ENCODE measurements at regions of chr6 and their contacts with region 1.

Region 1: GRCh38 chr6:148746363-148747144 is at the start of gene UST:
- DNase-seq: peak; percentile 92
- H3K4me3 ChIP-seq: peak within 1 kb of the TSS; percentile 87
- H3K27ac ChIP-seq: peak within 1 kb of the TSS; percentile 85
- H3K27me3 ChIP-seq: no peaks in the 10 kb centered on the region
- CTCF ChIP-seq: peak; percentile 40
- polyA plus RNA-seq, gene UST: 18.6 and 21.4 TPM in 2 replicates

Region 2: DNA sequence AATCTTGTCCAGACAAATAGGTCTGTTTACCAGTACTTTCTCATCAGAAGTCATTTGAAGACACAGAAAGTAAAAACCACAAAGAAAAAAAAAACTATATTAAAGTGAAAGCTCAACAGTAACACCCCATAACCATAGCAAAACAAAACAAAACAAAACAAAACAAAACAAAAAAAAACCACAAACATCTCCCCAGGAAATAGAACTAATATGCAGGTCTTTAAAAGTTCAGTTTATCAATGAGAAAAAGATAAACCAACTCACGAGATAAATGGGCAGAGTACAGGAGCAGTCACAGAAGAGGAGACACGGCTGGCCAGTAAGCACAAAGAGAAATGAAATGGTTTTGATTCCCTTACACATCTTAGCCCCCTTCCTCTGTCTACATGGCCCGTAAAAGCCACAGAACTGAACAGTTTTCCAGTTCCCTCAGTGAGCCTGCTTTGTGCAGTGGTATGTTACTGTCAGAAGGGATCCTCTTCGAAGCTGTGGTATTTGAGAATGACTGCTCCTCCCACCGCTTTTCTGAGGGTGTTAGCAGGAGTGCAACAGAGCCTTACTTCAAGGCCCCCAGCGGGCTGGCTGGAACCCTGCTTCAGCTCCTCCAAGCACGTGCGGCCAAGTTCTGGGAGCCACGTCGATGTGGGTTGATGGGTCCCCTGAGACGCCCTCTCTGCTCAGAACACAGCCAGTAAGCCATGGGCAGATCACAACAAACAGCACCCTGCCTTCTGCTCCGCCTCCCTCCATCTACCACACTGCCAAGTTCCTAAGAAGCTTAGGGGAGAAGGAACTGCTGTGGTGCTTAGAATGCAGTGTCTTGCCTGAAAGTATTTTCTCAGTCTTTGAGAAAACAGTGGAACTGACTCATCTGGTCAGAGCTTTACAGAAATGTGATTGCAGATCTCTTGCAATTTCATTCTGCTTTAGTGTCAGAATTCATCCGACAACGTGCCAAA is 14.3 kb after region 1 on chr6:
- CTCF ChIA-PET with region 1: interaction called, 3 read pairs
- POLR2A ChIA-PET with region 1: interaction called, 12 read pairs
- DNase-seq: peak; percentile 71
- H3K4me3 ChIP-seq: peak overlapping the region; percentile 55
- H3K27ac ChIP-seq: peak overlapping the region; percentile 87
- H3K27me3 ChIP-seq: no peaks in the 10 kb centered on the region
- CTCF ChIP-seq: no peak